ENCODE measurements at regions of chr4 and their contacts with region 1.

Region 1: DNA sequence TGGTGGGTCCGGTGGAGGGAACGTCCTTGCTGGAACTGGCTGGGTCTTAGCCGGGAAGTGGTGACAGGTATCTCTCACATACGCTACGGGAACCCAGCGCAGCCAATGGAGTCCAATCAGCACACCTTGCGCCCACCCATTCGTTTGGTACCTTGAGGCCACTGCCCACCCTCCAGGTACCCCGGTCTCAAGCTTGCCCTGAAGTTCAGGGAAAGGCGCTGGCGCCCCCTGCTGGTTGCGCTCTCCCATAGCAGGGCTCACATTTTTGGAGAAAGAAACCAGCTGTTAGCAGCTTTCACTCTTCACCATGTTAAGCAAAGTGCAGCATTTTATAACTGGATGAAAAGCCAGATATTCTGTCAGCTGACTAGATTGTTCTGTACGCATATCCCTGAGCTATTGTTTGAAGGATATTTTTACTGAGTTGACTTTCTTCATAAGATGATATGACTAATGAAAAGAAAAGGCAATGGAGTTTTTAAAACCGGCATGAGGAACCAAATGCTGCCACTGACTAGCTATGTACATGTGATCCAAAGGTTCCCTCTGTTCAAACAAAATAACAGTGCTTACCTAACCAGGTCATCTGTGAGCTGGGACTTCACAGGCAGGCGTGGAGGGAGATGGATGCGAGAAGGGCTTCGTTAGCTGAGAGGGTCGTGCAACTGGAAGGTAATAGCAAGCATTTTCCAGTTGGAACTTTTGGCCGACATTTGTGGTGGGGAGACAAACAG is 43.7 kb downstream of the OTOP1 start:
- DNase-seq: peak; percentile 39 to 88
- H3K4me3 ChIP-seq: no peak overlapping the region
- H3K27ac ChIP-seq: no peak overlapping the region
- H3K4me1 ChIP-seq: peaks cover 0 to 2% (median 0%) of the 10 kb centered on the region in 4 experiments; a peak in 1 of 7 replicates
- H3K27me3 ChIP-seq: no peaks in the 10 kb centered on the region
- CTCF ChIP-seq: peak; percentile 85 to 90 (median 87)
- EP300 ChIP-seq: no peak
- POLR2A ChIP-seq: no peak
- RAD21 ChIP-seq: peak; percentile 87 to 91

Region 2: GRCh38 chr4:4170596-4171150 is 12.3 kb before region 1 on chr4:
- CTCF ChIA-PET with region 1: interaction called, 18 read pairs
- POLR2A ChIA-PET with region 1: no interaction called
- DNase-seq: no peak
- H3K4me3 ChIP-seq: no peak overlapping the region
- H3K27ac ChIP-seq: no peak overlapping the region
- H3K4me1 ChIP-seq: no peaks in the 10 kb centered on the region; a peak in 1 of 7 replicates
- H3K27me3 ChIP-seq: no peaks in the 10 kb centered on the region
- CTCF ChIP-seq: no peak
- EP300 ChIP-seq: no peak
- POLR2A ChIP-seq: no peak
- RAD21 ChIP-seq: no peak

Region 3: GRCh38 chr4:4203688-4204400 is 20.8 kb after region 1 on chr4:
- CTCF ChIA-PET with region 1: interaction called, 13 read pairs
- POLR2A ChIA-PET with region 1: no interaction called
- DNase-seq: no peak
- H3K4me3 ChIP-seq: no peak overlapping the region
- H3K27ac ChIP-seq: no peak overlapping the region
- H3K4me1 ChIP-seq: peaks cover 0 to 2% (median 0%) of the 10 kb centered on the region in 4 experiments; a peak in 1 of 7 replicates
- H3K27me3 ChIP-seq: no peaks in the 10 kb centered on the region; a peak in 3 of 7 replicates
- CTCF ChIP-seq: no peak
- EP300 ChIP-seq: no peak
- POLR2A ChIP-seq: no peak
- RAD21 ChIP-seq: no peak

Region 4: GRCh38 chr4:4281787-4282186 is 98.8 kb after region 1 on chr4:
- CTCF ChIA-PET with region 1: no interaction called
- POLR2A ChIA-PET with region 1: no interaction called
- DNase-seq: no peak
- H3K4me3 ChIP-seq: no peak overlapping the region
- H3K27ac ChIP-seq: no peak overlapping the region
- H3K4me1 ChIP-seq: no peaks in the 10 kb centered on the region
- H3K27me3 ChIP-seq: no peaks in the 10 kb centered on the region
- CTCF ChIP-seq: no peak
- EP300 ChIP-seq: no peak
- POLR2A ChIP-seq: no peak
- RAD21 ChIP-seq: no peak

Region 5: GRCh38 chr4:4334798-4335520 is 152.0 kb after region 1 on chr4:
- CTCF ChIA-PET with region 1: no interaction called
- POLR2A ChIA-PET with region 1: no interaction called
- DNase-seq: peak; percentile 31 to 79
- H3K4me3 ChIP-seq: no peak overlapping the region
- H3K27ac ChIP-seq: no peak overlapping the region
- H3K4me1 ChIP-seq: no peaks in the 10 kb centered on the region
- H3K27me3 ChIP-seq: no peaks in the 10 kb centered on the region
- CTCF ChIP-seq: peak; percentile 75 to 82 (median 78)
- EP300 ChIP-seq: no peak
- POLR2A ChIP-seq: no peak
- RAD21 ChIP-seq: peak; percentile 83 to 88